ENCODE measurements at regions of chr9 and their contacts with region 1.

Region 1: GRCh38 chr9:137086531-137087408 is at the start of gene MAN1B1:
- DNase-seq: peak; percentile 98 to 100 (median 99)
- ATAC-seq: peak; percentile 84
- H3K4me3 ChIP-seq: peak within 1 kb of the TSS; percentile 76 to 88
- H3K4me3 Mint-ChIP-seq: peak within 1 kb of the TSS; percentile 88
- H3K27ac ChIP-seq: peak within 1 kb of the TSS; percentile 84 to 90
- H3K27ac Mint-ChIP-seq: peak within 1 kb of the TSS; percentile 95
- H3K4me1 ChIP-seq: peaks cover 24% of the 10 kb centered on the region
- H3K4me1 Mint-ChIP-seq: peaks cover 23% of the 10 kb centered on the region
- H3K27me3 ChIP-seq: no peaks in the 10 kb centered on the region
- H3K27me3 Mint-ChIP-seq: no peaks in the 10 kb centered on the region
- CTCF ChIP-seq: no peak
- total RNA-seq, gene MAN1B1: 60.3 to 62.9 TPM

Region 2: DNA sequence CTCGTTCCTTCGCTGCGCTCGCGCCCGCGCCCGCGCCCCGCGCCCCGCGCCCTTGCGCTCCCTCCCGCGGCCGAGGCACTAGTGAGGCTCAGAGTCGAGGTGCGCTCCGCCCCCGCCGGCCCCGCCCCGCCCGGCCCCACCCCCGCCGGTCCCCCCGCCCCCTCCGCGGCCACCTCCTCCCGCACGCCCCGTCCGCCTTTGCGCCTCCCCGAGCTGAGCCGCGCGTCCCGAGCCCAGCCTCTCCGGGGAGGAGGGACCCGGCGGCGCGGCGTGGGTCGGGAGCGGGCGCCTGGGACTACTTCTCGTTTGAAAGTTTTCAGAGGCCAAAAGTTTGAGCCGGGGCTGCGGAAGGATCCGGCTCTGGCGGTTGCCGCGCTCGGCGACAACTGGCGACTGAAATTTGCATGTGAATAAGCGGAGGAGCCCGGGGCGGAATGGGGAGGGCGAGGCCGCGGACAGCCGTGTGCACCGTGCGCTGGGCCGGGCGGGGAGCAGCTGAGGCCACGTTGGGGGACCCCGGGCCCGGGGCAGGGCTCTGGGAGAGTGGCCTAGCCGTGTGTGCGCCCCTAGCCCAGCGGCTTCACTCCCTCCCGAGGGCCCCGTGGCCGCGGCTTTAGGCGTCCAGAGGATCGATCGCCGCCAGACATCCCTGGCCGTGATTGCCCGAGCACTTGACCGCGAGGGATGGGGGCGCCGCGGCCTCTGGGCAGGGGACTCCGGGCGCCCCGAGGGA is 540.6 kb before region 1 on chr9 and contains the start of gene NOTCH1:
- CTCF ChIA-PET with region 1: no interaction called
- POLR2A ChIA-PET with region 1: no interaction called
- intact Hi-C with region 1: loop called in 1 of 2 experiments (anchors 5 kb)
- DNase-seq: peak; percentile 75 to 91 (median 83)
- ATAC-seq: peak; percentile 78
- H3K4me3 ChIP-seq: peak within 1 kb of the TSS; percentile 82 to 90
- H3K4me3 Mint-ChIP-seq: peak within 1 kb of the TSS; percentile 85
- H3K27ac ChIP-seq: peak within 1 kb of the TSS; percentile 50 to 55
- H3K27ac Mint-ChIP-seq: peak within 1 kb of the TSS; percentile 85
- H3K4me1 ChIP-seq: peaks cover 31% of the 10 kb centered on the region
- H3K4me1 Mint-ChIP-seq: peaks cover 27% of the 10 kb centered on the region
- H3K27me3 ChIP-seq: no peaks in the 10 kb centered on the region
- H3K27me3 Mint-ChIP-seq: no peaks in the 10 kb centered on the region
- CTCF ChIP-seq: no peak
- total RNA-seq, gene NOTCH1: 29.0 to 30.0 TPM

Region 3: GRCh38 chr9:136849038-136849959 is 237.5 kb before region 1 on chr9 and contains the start of gene PHPT1:
- CTCF ChIA-PET with region 1: no interaction called
- POLR2A ChIA-PET with region 1: no interaction called
- intact Hi-C with region 1: loop called in 1 of 2 experiments (anchors 1 kb)
- DNase-seq: peak; percentile 91 to 98 (median 96)
- ATAC-seq: peak; percentile 92
- H3K4me3 ChIP-seq: peak within 1 kb of the TSS; percentile 77 to 99
- H3K4me3 Mint-ChIP-seq: peak within 1 kb of the TSS; percentile 93
- H3K27ac ChIP-seq: peak within 1 kb of the TSS; percentile 47 to 68
- H3K27ac Mint-ChIP-seq: peak within 1 kb of the TSS; percentile 88
- H3K4me1 ChIP-seq: peaks cover 29% of the 10 kb centered on the region
- H3K4me1 Mint-ChIP-seq: peaks cover 15% of the 10 kb centered on the region
- H3K27me3 ChIP-seq: peaks cover 3 to 11% of the 10 kb centered on the region in 2 experiments
- H3K27me3 Mint-ChIP-seq: peaks cover 9% of the 10 kb centered on the region
- CTCF ChIP-seq: no peak
- total RNA-seq, gene PHPT1: 15.7 to 17.1 TPM

Region 4: DNA sequence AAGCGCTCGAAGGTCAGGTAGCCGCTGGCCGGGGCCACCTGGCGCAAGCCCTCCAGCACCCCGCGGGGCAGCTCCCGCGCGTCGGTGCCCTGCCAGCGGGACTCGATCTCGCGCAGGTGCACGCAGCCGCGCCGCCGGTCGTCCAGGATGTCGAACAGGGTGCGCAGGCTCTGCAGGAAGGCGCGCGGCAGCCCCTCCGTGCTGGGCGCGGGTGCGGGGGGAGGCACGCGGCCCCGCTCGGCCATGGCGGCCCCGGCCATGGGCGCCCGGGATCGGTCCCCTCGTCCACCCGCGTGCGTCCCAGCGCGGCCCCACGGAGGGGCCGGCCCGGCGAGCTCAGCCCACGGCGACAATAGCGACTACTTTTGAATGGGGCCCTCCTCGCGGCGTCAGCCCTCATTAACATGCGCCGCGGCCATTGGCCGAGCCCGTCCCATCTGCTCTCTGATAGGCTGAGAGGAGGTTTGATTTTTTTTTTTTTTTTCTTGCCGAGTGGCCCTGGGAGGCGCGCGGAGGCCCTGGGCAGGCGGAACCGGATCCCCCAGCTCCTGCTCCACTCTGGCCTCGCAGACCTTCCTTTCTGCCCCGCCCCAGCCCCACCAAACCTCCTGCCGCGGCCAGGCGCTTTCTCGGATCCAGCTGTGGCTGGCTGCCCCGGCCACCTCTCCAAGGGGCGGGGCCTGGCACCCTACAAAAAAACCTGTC is 16.4 kb before region 1 on chr9 and contains the start of gene SAPCD2:
- CTCF ChIA-PET with region 1: interaction called, 15 read pairs
- POLR2A ChIA-PET with region 1: interaction called, 19 read pairs
- intact Hi-C with region 1: loop called (anchors 1 kb)
- DNase-seq: peak; percentile 66 to 94 (median 82)
- ATAC-seq: peak; percentile 87
- H3K4me3 ChIP-seq: peak within 1 kb of the TSS; percentile 46 to 50
- H3K4me3 Mint-ChIP-seq: peak within 1 kb of the TSS; percentile 70
- H3K27ac ChIP-seq: peak within 1 kb of the TSS in 1 of 2 experiments; percentile 30
- H3K27ac Mint-ChIP-seq: no peak within 1 kb of the TSS
- H3K4me1 ChIP-seq: peaks cover 14% of the 10 kb centered on the region
- H3K4me1 Mint-ChIP-seq: peaks cover 14% of the 10 kb centered on the region
- H3K27me3 ChIP-seq: peaks cover 0 to 9% of the 10 kb centered on the region in 2 experiments
- H3K27me3 Mint-ChIP-seq: no peaks in the 10 kb centered on the region
- CTCF ChIP-seq: no peak
- total RNA-seq, gene SAPCD2: 0.38 to 0.47 TPM

Region 5: DNA sequence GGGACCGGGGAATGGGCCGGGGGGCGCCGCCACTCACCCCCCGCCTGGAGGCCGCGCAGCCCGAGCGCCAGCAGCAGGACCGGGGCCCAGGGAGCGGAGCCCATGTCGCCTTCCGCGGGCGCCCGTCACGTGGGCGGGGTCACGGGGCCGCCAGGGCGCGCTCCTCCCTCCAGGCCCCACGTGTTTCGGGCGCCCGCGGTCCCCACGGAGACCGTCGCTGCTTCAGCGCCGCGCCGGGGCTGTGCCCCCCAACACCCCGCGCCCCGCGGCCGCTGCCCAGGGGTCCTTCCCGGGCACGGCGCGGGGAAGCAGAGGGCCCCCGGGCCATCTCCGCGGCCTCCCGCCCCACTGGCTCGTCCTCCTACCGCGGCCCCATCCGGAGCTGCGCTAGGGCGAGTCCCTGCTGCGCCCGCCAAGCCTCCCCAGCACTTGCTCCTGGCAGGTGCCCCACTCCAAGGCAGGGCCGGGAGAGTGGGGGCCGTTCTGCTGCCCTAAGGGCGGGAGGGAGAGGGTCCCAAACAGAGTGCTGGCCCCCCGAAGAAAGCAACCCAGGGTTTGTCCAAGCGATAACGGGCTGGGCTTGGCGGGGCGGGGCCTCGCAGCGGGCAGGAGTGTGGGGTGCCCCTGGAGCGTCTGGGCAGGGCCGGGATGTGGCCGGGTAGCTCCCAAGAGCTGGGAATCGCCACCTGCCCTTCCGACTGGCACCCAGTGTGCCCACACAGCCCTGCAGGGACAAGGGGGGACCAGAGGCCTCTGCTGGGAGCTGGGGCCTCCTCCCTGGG is 28.0 kb after region 1 on chr9 and contains the start of gene DPP7:
- CTCF ChIA-PET with region 1: interaction called, 3 read pairs
- POLR2A ChIA-PET with region 1: interaction called, 7 read pairs
- intact Hi-C with region 1: loop called in 1 of 2 experiments (anchors 1 kb)
- DNase-seq: peak; percentile 50 to 90 (median 78)
- ATAC-seq: peak; percentile 90
- H3K4me3 ChIP-seq: peak within 1 kb of the TSS; percentile 43 to 58
- H3K4me3 Mint-ChIP-seq: peak within 1 kb of the TSS; percentile 69
- H3K27ac ChIP-seq: peak within 1 kb of the TSS in 1 of 2 experiments; percentile 30
- H3K27ac Mint-ChIP-seq: peak within 1 kb of the TSS; percentile 70
- H3K4me1 ChIP-seq: peaks cover 14% of the 10 kb centered on the region
- H3K4me1 Mint-ChIP-seq: peaks cover 7% of the 10 kb centered on the region
- H3K27me3 ChIP-seq: no peaks in the 10 kb centered on the region
- H3K27me3 Mint-ChIP-seq: no peaks in the 10 kb centered on the region
- CTCF ChIP-seq: no peak
- total RNA-seq, gene DPP7: 311 to 325 TPM

Region 6: GRCh38 chr9:137129456-137130175 is 42.8 kb after region 1 on chr9:
- CTCF ChIA-PET with region 1: interaction called, 7 read pairs
- POLR2A ChIA-PET with region 1: interaction called, 8 read pairs
- intact Hi-C with region 1: loop called in 1 of 2 experiments (anchors 2 kb)
- DNase-seq: peak; percentile 71 to 96 (median 88)
- ATAC-seq: peak; percentile 92
- H3K4me3 ChIP-seq: peak overlapping the region; percentile 70 to 83
- H3K4me3 Mint-ChIP-seq: peak overlapping the region; percentile 87
- H3K27ac ChIP-seq: peak overlapping the region; percentile 62 to 78
- H3K27ac Mint-ChIP-seq: peak overlapping the region; percentile 91
- H3K4me1 ChIP-seq: peaks cover 35% of the 10 kb centered on the region
- H3K4me1 Mint-ChIP-seq: peaks cover 28% of the 10 kb centered on the region
- H3K27me3 ChIP-seq: peaks cover 0 to 17% of the 10 kb centered on the region in 2 experiments
- H3K27me3 Mint-ChIP-seq: peaks cover 9% of the 10 kb centered on the region
- CTCF ChIP-seq: no peak

Region 7: GRCh38 chr9:137188490-137189296 is 101.9 kb after region 1 on chr9 and contains the starts of genes ANAPC2 and SSNA1:
- CTCF ChIA-PET with region 1: no interaction called
- POLR2A ChIA-PET with region 1: no interaction called
- intact Hi-C with region 1: loop called in 1 of 2 experiments (anchors 1 kb)
- DNase-seq: peak; percentile 84 to 98 (median 94)
- ATAC-seq: peak; percentile 80
- H3K4me3 ChIP-seq: peak within 1 kb of the TSS; percentile 92 to 100
- H3K4me3 Mint-ChIP-seq: peak within 1 kb of the TSS; percentile 93
- H3K27ac ChIP-seq: peak within 1 kb of the TSS; percentile 95 to 96
- H3K27ac Mint-ChIP-seq: peak within 1 kb of the TSS; percentile 96
- H3K4me1 ChIP-seq: peaks cover 34% of the 10 kb centered on the region
- H3K4me1 Mint-ChIP-seq: peaks cover 41% of the 10 kb centered on the region
- H3K27me3 ChIP-seq: no peaks in the 10 kb centered on the region
- H3K27me3 Mint-ChIP-seq: no peaks in the 10 kb centered on the region
- CTCF ChIP-seq: peak; percentile 56
- total RNA-seq, gene ANAPC2: 166 to 171 TPM
- total RNA-seq, gene SSNA1: 28.8 to 29.6 TPM